HEK293 (cell line): ENCODE measurements at regions of chr11 and their contacts with region 1.

Region 1: DNA sequence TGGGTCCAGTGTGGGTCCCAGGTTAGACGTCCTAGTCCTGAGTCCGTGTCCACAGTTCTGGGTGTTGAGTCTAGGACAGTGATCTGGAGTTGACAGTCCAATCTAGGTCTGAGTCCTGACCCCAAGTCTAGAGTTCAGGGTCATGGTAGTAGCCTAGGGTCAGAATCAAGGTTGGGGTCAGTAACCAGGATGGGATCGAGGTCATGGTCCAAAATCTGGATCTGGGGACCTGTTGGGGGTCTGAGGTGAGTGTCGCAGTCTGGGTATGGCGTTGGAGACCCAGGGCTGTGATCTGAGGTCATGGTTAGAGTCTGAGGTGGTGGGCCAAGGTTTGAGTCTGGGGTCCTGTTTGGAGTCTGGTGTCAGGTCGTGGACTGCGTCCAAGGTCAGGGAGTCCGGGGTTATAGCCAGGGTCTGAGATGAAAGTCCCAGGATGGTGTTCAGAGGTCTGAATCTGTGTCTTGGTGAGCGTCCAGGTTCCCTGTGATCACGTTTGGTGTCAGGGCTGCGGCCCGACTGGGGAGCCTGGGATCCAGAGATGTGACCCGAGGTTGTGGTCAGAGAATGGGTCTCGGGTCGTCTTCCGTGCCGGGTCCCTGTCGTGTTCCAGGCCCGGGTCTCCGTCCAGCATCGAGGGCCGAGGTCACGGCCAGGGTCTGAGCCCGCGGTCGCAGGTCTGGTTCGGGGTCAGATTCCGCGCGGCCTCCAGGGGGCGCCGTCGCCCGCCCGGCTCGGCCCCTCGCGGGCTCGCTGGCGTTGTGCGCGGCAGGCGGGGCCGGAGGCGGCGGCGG is 445 bp upstream of the GRK2 start:
- H3K4me3 ChIP-seq: peak overlapping the region; percentile 20
- H3K27ac ChIP-seq: no peak overlapping the region; the same call in 1 of the 2 replicates
- H3K4me1 ChIP-seq: no peaks in the 10 kb centered on the region
- CTCF ChIP-seq: peak; percentile 49; the same call in 1 of the 2 replicates

Region 2: GRCh38 chr11:67053896-67054842 is 211.7 kb before region 1 on chr11:
- CTCF ChIA-PET with region 1: interaction called, 23 read pairs
- POLR2A ChIA-PET with region 1: no interaction called
- H3K4me3 ChIP-seq: no peak overlapping the region
- H3K27ac ChIP-seq: no peak overlapping the region
- H3K4me1 ChIP-seq: peaks cover 9% of the 10 kb centered on the region
- CTCF ChIP-seq: peak; percentile 48; the same call in 1 of the 2 replicates

Region 3: GRCh38 chr11:67252831-67253239 is 13.0 kb before region 1 on chr11:
- CTCF ChIA-PET with region 1: interaction called, 65 read pairs
- POLR2A ChIA-PET with region 1: no interaction called
- H3K4me3 ChIP-seq: no peak overlapping the region
- H3K27ac ChIP-seq: no peak overlapping the region
- H3K4me1 ChIP-seq: no peaks in the 10 kb centered on the region
- CTCF ChIP-seq: peak; percentile 36; the same call in 1 of the 2 replicates

Region 4: DNA sequence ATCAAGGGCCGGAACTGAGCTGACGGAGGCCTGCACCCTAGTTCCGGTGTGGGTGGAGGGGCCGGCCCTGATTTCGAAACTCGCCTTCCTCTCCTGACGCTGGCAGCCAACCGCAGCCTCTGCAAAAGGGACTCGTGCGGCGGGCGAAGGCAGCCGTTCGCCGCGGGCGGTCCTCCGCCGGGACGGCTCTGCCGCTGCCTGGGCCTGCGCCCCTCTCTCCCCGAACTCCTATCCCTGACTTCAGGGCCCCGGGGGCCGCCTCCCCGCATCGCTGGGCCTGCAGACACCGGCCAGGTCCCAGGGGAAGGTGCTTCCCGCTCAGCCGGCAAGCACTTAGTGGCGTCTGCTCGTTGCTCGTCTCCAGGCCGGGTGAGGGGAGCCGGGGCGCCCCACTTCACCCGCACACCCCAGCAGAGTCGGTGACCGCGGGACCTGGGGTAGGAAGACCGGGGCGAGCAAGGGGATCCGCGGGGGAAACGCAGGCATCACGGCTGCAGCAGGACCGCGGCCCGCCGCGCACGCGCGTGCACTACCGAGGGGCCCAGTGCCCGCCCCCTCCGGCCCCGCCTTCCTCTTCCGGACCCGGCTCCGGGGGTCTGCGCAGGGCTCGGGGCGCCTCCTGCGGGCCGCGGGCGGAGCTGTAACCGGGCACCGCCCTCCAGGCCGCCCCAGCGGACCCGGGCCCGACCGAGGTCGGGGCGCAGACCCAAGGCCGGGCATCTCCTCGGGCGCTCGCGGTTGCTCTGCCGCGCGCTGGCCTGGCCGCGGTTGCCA is 22.8 kb after region 1 on chr11:
- CTCF ChIA-PET with region 1: interaction called, 17 read pairs
- POLR2A ChIA-PET with region 1: interaction called, 3 read pairs
- H3K4me3 ChIP-seq: peak overlapping the region; percentile 81
- H3K27ac ChIP-seq: peak overlapping the region; percentile 93
- H3K4me1 ChIP-seq: no peaks in the 10 kb centered on the region
- CTCF ChIP-seq: no peak; the same call in 1 of the 2 replicates

Region 5: DNA sequence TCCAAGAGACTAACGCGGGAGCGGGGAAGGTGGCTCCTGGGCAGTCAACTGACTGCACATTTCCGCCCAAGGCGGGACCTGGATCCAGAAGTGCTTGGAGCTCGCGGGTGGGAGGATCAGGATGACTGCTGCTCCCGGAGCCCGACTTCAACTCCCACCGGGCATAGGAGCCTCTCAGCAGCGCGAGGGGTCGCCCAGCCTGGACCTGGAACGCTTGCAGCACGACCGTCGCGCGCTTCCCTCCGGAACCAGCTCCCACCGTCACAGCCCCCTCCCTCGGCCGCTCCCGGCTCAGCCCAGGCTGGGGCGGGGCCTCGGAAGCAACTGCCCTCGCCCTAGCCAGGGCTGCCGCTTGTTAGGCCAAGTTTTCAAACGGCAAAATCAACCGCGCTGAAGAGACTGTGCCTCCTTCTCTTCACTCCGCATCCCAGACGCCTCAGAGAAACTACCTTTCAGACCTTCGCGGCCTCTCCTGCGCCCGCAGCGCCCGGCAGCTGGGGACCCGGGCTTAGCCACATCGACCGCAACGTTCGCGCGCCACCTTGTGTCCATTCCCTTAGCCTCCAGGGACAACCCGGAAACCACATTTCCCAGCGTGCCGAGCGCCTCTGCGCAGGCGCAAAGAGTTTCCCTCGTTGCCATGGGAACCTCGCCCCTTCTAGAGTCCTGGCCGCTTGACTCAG is 51.5 kb after region 1 on chr11:
- CTCF ChIA-PET with region 1: interaction called, 104 read pairs
- POLR2A ChIA-PET with region 1: interaction called, 7 read pairs
- H3K4me3 ChIP-seq: peak overlapping the region; percentile 75
- H3K27ac ChIP-seq: peak overlapping the region; percentile 79
- H3K4me1 ChIP-seq: no peaks in the 10 kb centered on the region
- CTCF ChIP-seq: peak; percentile 98

Region 6: DNA sequence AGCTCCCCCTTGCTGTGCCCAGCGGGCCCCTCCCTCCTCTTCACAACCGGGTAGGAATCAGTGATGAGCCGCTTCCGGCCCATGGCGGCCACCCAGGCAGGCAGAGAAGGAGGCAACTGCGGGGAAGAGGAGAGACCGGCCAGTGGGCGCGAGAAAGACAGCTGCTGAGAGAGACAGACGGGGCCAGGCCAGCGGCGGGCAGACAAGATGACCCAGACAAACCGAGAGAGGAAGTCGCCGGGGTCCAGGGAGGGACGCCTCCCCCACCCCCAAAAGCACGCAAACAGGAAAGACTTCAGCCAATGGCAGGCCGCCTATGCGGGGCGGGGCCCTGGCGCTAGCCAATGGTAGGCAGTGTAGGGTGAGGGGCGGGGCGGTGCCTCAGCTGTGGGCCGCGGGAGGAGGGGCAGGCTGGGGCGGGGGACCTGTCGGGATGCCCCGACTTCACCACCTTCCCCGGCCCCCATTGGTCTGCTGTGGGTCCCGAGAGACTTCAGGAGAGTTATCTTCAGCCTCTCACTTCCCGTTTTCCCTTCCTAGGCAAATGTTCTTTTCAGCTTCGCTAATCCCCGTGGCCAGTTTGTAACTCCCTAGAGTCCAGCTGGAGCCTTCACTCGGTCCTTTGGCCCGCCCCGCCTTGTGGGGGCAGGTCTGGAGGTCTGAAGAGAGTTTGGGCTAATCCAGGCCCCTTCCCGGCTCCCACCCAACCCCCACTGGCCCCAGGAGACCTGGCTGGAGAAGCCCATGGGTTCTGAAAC is 87.7 kb after region 1 on chr11 and contains the start of gene POLD4:
- CTCF ChIA-PET with region 1: interaction called, 18 read pairs
- POLR2A ChIA-PET with region 1: interaction called, 4 read pairs
- H3K4me3 ChIP-seq: peak within 1 kb of the TSS; percentile 72
- H3K27ac ChIP-seq: peak within 1 kb of the TSS; percentile 59
- H3K4me1 ChIP-seq: no peaks in the 10 kb centered on the region
- CTCF ChIP-seq: no peak

Region 7: DNA sequence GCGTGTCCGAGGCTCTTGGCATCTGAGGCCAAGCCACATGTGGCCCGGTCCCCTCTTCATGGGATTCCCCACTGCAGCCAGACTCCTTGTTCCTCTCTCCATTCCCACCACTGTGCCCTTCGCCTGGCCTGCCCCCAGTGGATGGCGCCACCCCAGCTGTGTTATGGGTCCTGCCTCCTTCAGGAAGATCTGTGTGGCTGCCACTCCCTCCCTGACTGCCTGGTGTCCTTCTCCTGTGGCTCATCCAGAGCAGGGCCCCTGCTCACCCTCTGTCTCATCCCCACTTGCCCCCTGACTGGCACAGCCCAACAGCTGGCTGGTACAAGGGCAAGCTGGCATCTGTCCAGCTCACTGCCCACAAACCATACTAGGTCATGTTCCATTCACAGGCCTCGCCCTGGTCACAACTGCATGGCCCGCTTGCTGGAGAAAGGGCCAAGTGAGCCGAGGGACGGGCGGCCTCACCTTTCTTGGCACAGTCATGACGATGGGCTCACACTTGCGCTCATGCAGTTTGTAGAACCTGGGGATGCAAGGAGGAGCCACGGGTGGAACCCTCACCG is 173.6 kb after region 1 on chr11:
- CTCF ChIA-PET with region 1: no interaction called
- POLR2A ChIA-PET with region 1: no interaction called
- H3K4me3 ChIP-seq: no peak overlapping the region
- H3K27ac ChIP-seq: no peak overlapping the region
- H3K4me1 ChIP-seq: no peaks in the 10 kb centered on the region
- CTCF ChIP-seq: peak; percentile 42; the same call in 1 of the 2 replicates